HEK293T (cell line): ENCODE measurements at regions of chr13 and their contacts with region 1.

Region 1: GRCh38 chr13:30121666-30122065 is 185.7 kb downstream of the KATNAL1 start:
- DNase-seq: no peak

Region 2: DNA sequence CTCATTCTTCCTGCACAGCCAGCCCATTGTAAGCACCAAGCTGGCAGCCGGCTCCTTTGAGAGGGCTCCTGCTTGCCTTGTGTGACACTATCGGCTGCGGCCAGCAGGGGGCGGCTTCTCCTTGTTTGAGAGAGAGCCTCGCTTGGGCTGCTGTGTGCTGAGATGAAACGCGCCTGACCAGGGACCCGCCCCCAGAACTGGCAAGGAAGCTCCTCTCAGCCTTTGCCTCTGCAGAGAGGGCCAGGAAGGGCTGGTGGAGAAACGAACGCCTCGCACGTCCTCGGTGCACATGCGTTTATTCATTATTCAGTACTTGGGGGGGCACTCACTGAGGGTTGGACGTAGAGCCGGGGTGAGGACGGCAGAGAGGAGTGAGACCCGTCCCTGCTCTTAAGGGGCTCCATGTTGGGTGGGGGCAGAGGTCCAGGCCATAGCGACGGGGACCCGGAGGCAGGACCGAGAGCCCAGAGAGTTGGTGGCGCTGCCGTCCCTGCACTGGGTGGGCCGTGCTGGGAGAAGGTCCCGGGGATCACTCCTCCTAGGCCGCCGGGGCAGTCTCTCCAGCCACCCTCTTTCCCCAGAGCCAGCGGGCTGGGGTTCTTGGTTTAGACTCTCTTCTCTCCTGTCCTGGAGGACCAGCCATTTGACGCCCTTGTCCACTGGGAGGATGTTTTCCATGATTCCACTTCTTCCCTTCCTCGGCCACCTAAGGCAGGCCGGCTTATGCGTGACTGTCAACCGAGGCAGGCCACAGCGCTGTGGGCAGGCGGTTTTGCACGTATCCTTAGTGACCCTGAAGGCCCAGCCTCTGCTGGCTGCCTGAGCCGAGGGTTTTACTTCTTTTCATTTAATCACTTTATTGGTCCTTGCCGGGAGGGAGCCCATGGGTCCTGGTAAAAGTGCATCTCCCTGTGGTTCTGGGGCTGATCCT is 11.2 kb after region 1 on chr13:
- CTCF ChIA-PET with region 1: interaction called, 11 read pairs
- POLR2A ChIA-PET with region 1: no interaction called
- DNase-seq: peak; percentile 90

Region 3: GRCh38 chr13:30196025-30196424 is 74.4 kb after region 1 on chr13:
- CTCF ChIA-PET with region 1: no interaction called
- POLR2A ChIA-PET with region 1: no interaction called
- DNase-seq: peak; percentile 21